ENCODE measurements at regions of chr2 and their contacts with region 1.

Region 1: GRCh38 chr2:105072039-105072438 is 34.2 kb downstream of the MRPS9 start:
- DNase-seq: peak; percentile 15
- H3K4me3 Mint-ChIP-seq: no peak overlapping the region
- H3K27ac Mint-ChIP-seq: no peak overlapping the region
- H3K4me1 Mint-ChIP-seq: peaks cover 21% of the 10 kb centered on the region
- H3K27me3 Mint-ChIP-seq: no peaks in the 10 kb centered on the region

Region 2: DNA sequence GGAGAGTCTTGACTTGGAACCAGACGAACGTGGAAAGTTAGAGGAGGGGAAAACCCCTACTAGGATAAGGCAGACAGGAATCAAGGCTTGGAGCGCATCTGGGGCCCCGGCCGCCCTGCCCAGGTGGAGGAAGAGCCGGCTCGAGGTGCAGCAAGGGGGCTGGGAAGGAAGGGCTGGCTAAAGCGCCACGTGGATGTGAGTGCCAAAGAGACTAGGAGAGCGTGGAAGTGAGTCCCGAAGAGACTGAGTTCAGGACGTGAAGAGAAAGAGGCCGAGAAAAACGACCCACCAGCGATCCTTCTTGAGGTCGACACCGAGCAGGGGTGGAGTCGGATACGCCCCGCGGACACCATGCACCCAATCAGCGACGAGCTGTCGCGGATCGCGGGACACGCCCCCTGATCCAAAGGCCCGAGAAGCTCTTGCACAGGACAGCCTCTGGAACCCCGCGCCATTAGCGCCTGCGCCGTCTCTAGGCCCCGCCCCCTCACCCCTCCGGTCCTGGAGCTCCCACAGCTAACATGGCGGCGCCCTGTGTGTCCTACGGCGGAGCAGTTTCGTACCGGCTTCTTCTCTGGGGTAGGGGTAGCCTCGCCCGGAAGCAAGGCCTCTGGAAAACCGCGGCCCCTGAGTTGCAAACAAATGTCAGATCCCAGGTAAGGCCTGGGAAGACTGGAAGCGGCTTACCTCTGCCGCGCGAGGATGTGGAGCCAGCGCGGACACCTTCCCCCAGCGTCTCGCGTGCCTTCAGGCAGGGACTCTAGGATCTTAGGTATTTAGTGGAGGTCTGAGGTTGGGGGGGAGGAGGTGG is 34.3 kb before region 1 on chr2 and contains the start of gene MRPS9:
- intact Hi-C with region 1: loop called (anchors 2 kb)
- DNase-seq: peak; percentile 97
- H3K4me3 Mint-ChIP-seq: peak within 1 kb of the TSS; percentile 94
- H3K27ac Mint-ChIP-seq: peak within 1 kb of the TSS; percentile 79
- H3K4me1 Mint-ChIP-seq: peaks cover 23% of the 10 kb centered on the region
- H3K27me3 Mint-ChIP-seq: no peaks in the 10 kb centered on the region
- total RNA-seq, gene MRPS9: 28.8 and 31.9 TPM in 2 replicates

Region 3: DNA sequence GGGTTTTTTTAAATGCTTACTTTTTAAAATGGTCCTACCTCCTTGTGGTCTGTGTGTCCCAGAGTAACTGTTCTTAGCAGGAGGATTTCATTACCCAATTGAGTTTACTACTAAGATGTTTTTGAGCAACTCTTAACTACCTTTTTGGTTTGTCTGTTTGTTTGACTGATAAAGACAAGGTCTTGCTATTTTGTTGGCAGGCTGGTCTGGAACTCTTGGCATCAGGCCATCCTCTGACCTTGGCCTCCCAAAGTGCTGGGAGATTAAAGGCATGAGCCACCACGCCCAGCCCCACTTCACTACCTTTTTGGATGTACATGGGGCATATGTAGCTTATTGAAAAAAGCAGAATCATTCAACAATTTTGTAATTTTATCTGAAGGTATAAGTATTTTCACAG is 19.3 kb before region 1 on chr2:
- intact Hi-C with region 1: no loop called
- DNase-seq: no peak
- H3K4me3 Mint-ChIP-seq: no peak overlapping the region
- H3K27ac Mint-ChIP-seq: no peak overlapping the region
- H3K4me1 Mint-ChIP-seq: peaks cover 14% of the 10 kb centered on the region
- H3K27me3 Mint-ChIP-seq: no peaks in the 10 kb centered on the region

Region 4: GRCh38 chr2:105087273-105087672 is 15.2 kb after region 1 on chr2:
- intact Hi-C with region 1: loop called (anchors 2 kb)
- DNase-seq: no peak
- H3K4me3 Mint-ChIP-seq: no peak overlapping the region
- H3K27ac Mint-ChIP-seq: no peak overlapping the region
- H3K4me1 Mint-ChIP-seq: peaks cover 7% of the 10 kb centered on the region
- H3K27me3 Mint-ChIP-seq: no peaks in the 10 kb centered on the region

Measured in activated T-helper 2 cell treated with anti-CD3 and anti-CD28 coated beads, Interferon-gamma antibody, Interleukin-2, Interleukin-4, amounts not matched to agents 10 μg/mL and 5 μg/mL and 100 μg/mL, durations not matched to agents 14 hours and 24 hours and 36 hours (primary cell).